ENCODE measurements at regions of chr13 and their contacts with region 1.

Region 1: GRCh38 chr13:27362064-27362883 is 62.1 kb upstream of the GTF3A start:
- DNase-seq: peak; percentile 89
- H3K4me3 ChIP-seq: peak overlapping the region; percentile 45 to 66
- H3K27ac ChIP-seq: no peak overlapping the region
- H3K4me1 ChIP-seq: peaks cover 0 to 5% of the 10 kb centered on the region in 2 experiments; a peak in 1 of 4 replicates
- H3K27me3 ChIP-seq: peaks cover 27% of the 10 kb centered on the region
- CTCF ChIP-seq: peak; percentile 92
- EP300 ChIP-seq: no peak
- RAD21 ChIP-seq: peak; percentile 90

Region 2: GRCh38 chr13:26965952-26966700 is 396.1 kb before region 1 on chr13:
- CTCF ChIA-PET with region 1: interaction called, 12 read pairs
- POLR2A ChIA-PET with region 1: no interaction called
- DNase-seq: no peak
- H3K4me3 ChIP-seq: no peak overlapping the region
- H3K27ac ChIP-seq: no peak overlapping the region
- H3K4me1 ChIP-seq: peaks cover 0 to 7% of the 10 kb centered on the region in 2 experiments; a peak in 1 of 4 replicates
- H3K27me3 ChIP-seq: no peaks in the 10 kb centered on the region
- CTCF ChIP-seq: no peak
- EP300 ChIP-seq: no peak
- RAD21 ChIP-seq: no peak

Region 3: DNA sequence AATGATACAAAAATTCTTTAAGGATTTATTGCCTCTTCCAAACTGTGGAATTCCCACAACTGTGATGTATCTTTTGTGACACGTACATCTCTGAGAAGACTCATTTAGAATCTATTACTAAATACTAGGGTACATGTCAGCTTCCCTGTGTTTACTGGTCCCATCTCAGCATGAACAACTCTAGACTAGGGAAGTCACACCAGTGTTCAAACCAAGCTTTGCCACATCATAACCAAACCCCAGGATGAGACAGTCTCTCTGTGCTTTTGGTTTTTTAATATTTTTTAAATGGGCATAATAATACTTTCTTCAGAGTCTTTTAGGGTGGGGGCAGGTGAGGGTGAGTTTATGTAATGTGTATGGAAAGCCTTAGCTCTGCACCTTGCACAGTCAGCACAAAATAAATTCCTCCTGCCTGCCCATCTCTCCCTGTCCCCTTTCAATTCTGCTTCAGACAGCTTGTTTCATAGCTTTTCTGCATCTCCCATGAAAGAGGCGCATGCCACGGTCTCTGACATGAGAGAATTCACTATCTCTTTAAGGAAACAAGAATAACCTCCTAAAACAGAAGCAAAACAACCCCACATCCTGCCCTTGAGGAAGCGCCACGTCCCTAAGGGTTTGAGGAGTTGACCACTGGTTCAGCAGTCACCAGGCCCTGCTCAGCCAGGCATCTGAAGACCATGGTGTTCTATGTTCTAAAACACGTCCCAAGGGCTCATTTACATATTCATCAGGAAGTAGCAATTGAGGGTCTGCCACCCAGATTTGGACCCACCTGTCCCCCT is 365.1 kb before region 1 on chr13:
- CTCF ChIA-PET with region 1: interaction called, 13 read pairs
- POLR2A ChIA-PET with region 1: no interaction called
- DNase-seq: no peak
- H3K4me3 ChIP-seq: no peak overlapping the region
- H3K27ac ChIP-seq: no peak overlapping the region
- H3K4me1 ChIP-seq: no peaks in the 10 kb centered on the region
- H3K27me3 ChIP-seq: no peaks in the 10 kb centered on the region
- CTCF ChIP-seq: no peak
- EP300 ChIP-seq: no peak
- RAD21 ChIP-seq: no peak

Region 4: DNA sequence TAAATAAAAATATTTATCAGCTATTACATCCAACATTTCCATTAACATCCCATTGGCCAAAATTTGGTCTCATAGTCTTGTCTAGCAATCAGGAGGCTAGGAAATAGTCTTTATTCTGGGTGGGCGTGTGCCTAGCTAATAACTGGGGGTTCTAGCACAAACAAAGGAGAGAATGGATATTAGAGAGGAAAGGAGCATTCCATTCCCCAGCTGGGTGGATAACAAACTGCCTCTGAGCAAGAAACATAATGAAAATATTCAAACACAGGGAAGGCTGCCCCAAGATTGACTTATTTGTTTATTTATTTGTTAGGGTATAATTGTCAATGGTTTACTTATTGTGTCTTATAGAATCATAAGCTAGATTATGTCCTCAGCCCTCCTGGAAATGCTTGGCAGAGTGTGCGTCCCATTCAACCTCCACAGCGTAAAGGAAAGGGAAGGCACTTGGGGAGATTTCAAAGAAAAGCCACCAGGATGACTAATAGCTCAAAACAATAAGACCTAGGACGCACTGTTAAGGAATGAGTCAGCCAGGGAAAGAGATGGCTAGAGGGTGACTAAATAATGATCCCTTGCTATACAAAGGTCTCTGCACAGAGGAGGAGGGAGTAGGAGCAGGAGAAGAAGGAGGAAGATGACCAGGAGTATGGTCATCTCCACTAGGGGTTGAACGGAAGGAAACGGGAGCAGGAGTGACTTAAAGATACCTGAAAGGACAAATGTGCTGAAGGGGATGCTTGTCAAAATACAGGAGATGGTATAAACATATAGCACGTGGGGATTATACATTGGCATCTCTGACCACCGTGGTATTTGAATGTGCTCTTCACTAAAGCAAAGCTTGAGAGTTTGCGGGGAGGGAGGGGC is 167.1 kb before region 1 on chr13:
- CTCF ChIA-PET with region 1: no interaction called
- POLR2A ChIA-PET with region 1: no interaction called
- DNase-seq: no peak
- H3K4me3 ChIP-seq: no peak overlapping the region
- H3K27ac ChIP-seq: peak overlapping the region in 1 of 2 experiments; percentile 78; a peak in 2 of 4 replicates
- H3K4me1 ChIP-seq: peaks cover 0 to 13% of the 10 kb centered on the region in 2 experiments; a peak in 2 of 4 replicates
- H3K27me3 ChIP-seq: no peaks in the 10 kb centered on the region
- CTCF ChIP-seq: 0 out of 2 replicates have a peak, but pooled peaks have one; percentile 14
- EP300 ChIP-seq: peak in 1 of 2 experiments; percentile 77; a peak in 2 of 4 replicates
- RAD21 ChIP-seq: no peak

Region 5: DNA sequence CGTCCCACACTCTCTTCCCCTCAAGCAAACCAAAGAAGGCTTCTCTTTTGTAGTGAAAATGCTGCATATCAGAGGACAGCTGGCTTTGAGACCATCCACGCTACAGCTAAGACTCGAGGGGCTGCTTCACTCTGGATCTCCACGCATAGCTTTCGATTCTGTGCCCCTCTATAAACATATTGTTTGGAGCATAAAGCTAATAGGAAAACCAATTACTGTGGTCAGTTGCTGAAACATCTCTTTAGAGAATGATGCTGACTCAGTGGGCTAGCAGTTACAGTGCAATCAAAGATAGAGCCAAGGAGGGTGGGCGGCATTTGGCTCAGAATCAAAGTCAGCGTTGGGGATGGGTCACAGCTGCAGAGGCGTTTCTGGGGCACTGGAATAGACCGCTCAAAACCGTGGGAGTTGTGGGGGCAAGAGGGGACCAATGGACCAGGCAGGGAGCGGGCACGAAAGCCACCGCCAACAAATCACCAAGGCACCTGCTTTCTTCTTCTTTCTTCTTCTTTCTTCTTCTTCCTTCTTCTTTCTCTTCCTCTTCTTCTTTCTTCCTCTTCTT is 15.0 kb before region 1 on chr13:
- CTCF ChIA-PET with region 1: interaction called, 31 read pairs
- POLR2A ChIA-PET with region 1: no interaction called
- DNase-seq: no peak
- H3K4me3 ChIP-seq: no peak overlapping the region
- H3K27ac ChIP-seq: no peak overlapping the region
- H3K4me1 ChIP-seq: no peaks in the 10 kb centered on the region
- H3K27me3 ChIP-seq: peaks cover 50% of the 10 kb centered on the region
- CTCF ChIP-seq: no peak
- EP300 ChIP-seq: no peak
- RAD21 ChIP-seq: no peak

Region 6: GRCh38 chr13:27424246-27425157 is 62.2 kb after region 1 on chr13 and contains the start of gene GTF3A:
- CTCF ChIA-PET with region 1: interaction called, 16 read pairs
- POLR2A ChIA-PET with region 1: no interaction called
- DNase-seq: peak; percentile 98
- H3K4me3 ChIP-seq: peak within 1 kb of the TSS; percentile 74 to 88
- H3K27ac ChIP-seq: peak within 1 kb of the TSS; percentile 64 to 67
- H3K4me1 ChIP-seq: peaks cover 10 to 21% of the 10 kb centered on the region in 2 experiments
- H3K27me3 ChIP-seq: no peaks in the 10 kb centered on the region
- CTCF ChIP-seq: no peak
- EP300 ChIP-seq: no peak
- RAD21 ChIP-seq: no peak
- polyA plus RNA-seq, gene GTF3A: 57.1 and 75.4 TPM in 2 replicates

Region 7: GRCh38 chr13:27977476-27978300 is 615.4 kb after region 1 on chr13:
- CTCF ChIA-PET with region 1: interaction called, 27 read pairs
- POLR2A ChIA-PET with region 1: no interaction called
- DNase-seq: no peak
- H3K4me3 ChIP-seq: no peak overlapping the region
- H3K27ac ChIP-seq: no peak overlapping the region
- H3K4me1 ChIP-seq: no peaks in the 10 kb centered on the region
- H3K27me3 ChIP-seq: peaks cover 98% of the 10 kb centered on the region
- CTCF ChIP-seq: no peak
- EP300 ChIP-seq: no peak
- RAD21 ChIP-seq: no peak

Measured in SK-N-SH (cell line).